Activated CD4-positive, alpha-beta T cell treated with anti-CD3 and anti-CD28 coated beads, Interleukin-2, amount 10 ng/mL, durations not matched to agents 24 days and 14 days (primary cell): ENCODE measurements at regions of chr2 and their contacts with region 1.

Region 1: GRCh38 chr2:64914735-64915509 is 74.3 kb upstream of the SLC1A4 start:
- DNase-seq: no peak
- H3K4me3 Mint-ChIP-seq: no peak overlapping the region
- H3K27ac Mint-ChIP-seq: no peak overlapping the region
- H3K4me1 Mint-ChIP-seq: peaks cover 35% of the 10 kb centered on the region
- H3K27me3 Mint-ChIP-seq: no peaks in the 10 kb centered on the region

Region 2: GRCh38 chr2:64474121-64474571 is 440.8 kb before region 1 on chr2:
- intact Hi-C with region 1: no loop called
- DNase-seq: no peak
- H3K4me3 Mint-ChIP-seq: no peak overlapping the region
- H3K27ac Mint-ChIP-seq: no peak overlapping the region
- H3K4me1 Mint-ChIP-seq: peaks cover 13% of the 10 kb centered on the region
- H3K27me3 Mint-ChIP-seq: peaks cover 8% of the 10 kb centered on the region

Region 3: GRCh38 chr2:64904413-64905329 is 10.3 kb before region 1 on chr2:
- intact Hi-C with region 1: no loop called
- DNase-seq: no peak
- H3K4me3 Mint-ChIP-seq: no peak overlapping the region
- H3K27ac Mint-ChIP-seq: no peak overlapping the region
- H3K4me1 Mint-ChIP-seq: peaks cover 5% of the 10 kb centered on the region
- H3K27me3 Mint-ChIP-seq: peaks cover 15% of the 10 kb centered on the region

Region 4: DNA sequence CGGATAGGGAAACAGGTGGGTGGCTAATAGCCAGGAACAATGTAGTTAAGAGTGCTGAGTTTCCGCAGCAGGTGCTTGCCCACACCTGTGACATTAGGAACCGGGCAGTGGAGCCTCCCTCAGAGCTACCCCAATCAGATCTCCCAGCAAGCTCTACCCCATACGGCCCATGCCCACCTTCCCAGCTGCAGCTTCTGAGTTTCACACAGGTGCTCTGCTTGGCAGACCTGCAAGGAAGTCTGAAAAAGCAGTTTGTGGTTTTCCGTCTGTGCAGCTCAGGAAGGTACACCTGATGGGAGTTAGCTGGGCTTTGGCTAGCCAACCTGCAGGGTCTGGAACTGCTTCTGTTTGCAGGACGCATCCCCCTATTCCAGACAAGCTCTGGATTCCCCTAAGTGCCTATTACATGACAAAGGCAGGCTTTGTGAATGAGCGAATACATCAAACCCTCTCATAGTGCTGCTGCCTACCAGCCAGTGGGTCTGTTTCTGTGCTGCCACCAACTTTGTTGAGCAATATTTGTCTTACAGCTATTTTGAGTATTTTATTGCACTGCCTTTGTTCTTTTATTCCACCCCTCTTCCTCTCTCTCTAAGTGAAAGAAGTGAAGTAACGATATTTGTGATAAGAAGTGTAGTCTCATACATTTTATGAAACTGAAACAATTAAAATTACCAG is 116.6 kb after region 1 on chr2:
- intact Hi-C with region 1: loop called (anchors 2 kb)
- DNase-seq: no peak
- H3K4me3 Mint-ChIP-seq: peak overlapping the region; percentile 2
- H3K27ac Mint-ChIP-seq: peak overlapping the region; percentile 50
- H3K4me1 Mint-ChIP-seq: peaks cover 19% of the 10 kb centered on the region
- H3K27me3 Mint-ChIP-seq: no peaks in the 10 kb centered on the region

Region 5: GRCh38 chr2:65040400-65041261 is 125.7 kb after region 1 on chr2:
- intact Hi-C with region 1: loop called (anchors 1 kb)
- DNase-seq: peak; percentile 94
- H3K4me3 Mint-ChIP-seq: peak overlapping the region; percentile 53
- H3K27ac Mint-ChIP-seq: no peak overlapping the region
- H3K4me1 Mint-ChIP-seq: peaks cover 20% of the 10 kb centered on the region
- H3K27me3 Mint-ChIP-seq: no peaks in the 10 kb centered on the region

Region 6: DNA sequence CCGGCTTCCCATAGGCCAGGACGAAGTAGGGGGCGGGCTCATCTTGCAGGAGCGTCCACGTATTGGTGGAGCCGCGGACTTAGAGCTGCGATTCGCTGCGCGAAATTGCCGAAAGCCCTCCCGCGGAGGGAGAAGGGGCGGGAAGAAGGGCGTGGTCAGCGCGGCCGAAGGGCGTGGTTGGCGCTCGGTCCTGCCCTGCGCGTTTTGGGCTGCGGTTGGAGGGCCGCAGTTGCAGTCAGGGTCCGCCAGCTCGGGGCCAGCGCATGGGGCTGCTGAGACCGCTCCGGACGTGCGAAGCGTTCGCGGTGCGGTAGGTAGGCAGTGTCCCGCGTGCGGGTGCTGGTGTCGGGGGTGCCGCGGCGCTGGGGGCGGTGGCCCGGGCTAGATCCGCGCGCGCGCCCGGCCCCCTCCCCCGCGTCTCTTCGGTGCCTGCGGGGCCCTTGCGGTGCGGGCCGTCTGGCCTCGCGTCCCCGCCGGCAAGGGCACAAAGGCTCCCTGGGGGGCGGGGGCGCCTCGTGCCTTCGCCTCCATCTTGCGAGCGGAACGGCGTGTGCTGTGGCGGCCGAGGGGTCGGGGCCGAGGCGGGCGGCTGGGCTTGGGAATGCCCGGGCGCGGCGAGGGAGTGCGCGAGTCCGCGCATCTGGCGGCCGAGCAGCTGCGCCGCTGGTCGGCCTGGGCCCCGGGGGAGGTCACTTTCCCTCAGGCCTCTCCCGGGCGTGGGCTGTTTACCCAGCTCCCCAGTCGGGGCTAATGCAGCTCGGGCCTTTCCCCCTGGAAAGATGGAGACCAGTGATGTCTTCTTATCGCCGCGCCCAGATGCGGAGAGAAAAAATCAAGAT is 141.5 kb after region 1 on chr2 and contains the start of gene CEP68:
- intact Hi-C with region 1: loop called (anchors 5 kb)
- DNase-seq: peak; percentile 99
- H3K4me3 Mint-ChIP-seq: peak within 1 kb of the TSS; percentile 97
- H3K27ac Mint-ChIP-seq: peak within 1 kb of the TSS; percentile 87
- H3K4me1 Mint-ChIP-seq: peaks cover 50% of the 10 kb centered on the region
- H3K27me3 Mint-ChIP-seq: peaks cover 2% of the 10 kb centered on the region
- total RNA-seq, gene CEP68: 4.4 and 4.9 TPM in 2 replicates

Region 7: DNA sequence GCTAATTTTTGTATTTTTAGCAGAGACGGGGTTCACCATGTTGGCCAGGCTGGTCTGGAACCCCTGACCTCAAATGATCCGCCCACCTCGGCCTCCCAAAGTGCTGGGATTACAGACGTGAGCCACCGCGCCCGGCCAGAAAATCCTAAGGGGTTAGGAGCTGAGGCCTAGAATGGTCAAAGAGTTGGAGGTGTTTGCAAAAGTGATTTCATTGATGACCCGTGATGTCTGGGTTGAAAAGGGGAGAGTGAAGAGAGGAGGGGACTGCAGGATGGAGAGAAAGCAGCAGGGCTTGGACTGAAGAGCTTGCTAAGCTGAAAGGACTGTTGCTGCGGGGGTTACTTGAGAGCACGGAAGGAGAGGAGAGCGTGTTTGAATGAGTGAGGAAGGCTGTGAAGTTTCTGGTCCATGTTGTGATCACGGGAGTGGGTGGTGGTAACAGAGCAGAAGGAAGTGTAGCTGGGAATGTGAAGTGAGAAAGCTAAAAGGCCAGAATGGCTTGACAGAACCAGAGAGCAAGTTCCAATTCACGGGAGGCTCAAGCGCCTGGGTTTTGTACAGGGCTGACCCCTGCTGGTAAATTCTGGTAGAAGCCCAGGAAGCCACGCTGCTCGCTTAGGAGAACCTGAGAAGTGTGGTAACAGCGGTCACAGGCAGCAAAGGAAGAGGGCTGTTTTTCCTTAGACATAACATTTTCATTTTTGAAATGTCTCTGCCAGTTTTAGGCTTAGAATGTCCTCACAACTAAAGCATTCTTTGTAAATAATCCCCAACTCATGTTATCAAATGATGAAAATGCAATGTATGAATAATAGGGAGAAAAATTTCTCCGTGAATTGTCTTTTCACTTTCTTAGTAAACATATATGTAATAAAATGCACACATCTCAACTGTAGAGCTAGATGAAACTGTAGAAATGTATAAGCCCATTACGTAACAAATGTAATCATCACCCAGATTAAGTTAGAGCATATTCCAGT is 272.2 kb after region 1 on chr2:
- intact Hi-C with region 1: loop called (anchors 5 kb)
- DNase-seq: peak; percentile 90
- H3K4me3 Mint-ChIP-seq: no peak overlapping the region
- H3K27ac Mint-ChIP-seq: no peak overlapping the region
- H3K4me1 Mint-ChIP-seq: peaks cover 9% of the 10 kb centered on the region
- H3K27me3 Mint-ChIP-seq: peaks cover 27% of the 10 kb centered on the region